ENCODE measurements at regions of chr4 and their contacts with region 1.

Region 1: DNA sequence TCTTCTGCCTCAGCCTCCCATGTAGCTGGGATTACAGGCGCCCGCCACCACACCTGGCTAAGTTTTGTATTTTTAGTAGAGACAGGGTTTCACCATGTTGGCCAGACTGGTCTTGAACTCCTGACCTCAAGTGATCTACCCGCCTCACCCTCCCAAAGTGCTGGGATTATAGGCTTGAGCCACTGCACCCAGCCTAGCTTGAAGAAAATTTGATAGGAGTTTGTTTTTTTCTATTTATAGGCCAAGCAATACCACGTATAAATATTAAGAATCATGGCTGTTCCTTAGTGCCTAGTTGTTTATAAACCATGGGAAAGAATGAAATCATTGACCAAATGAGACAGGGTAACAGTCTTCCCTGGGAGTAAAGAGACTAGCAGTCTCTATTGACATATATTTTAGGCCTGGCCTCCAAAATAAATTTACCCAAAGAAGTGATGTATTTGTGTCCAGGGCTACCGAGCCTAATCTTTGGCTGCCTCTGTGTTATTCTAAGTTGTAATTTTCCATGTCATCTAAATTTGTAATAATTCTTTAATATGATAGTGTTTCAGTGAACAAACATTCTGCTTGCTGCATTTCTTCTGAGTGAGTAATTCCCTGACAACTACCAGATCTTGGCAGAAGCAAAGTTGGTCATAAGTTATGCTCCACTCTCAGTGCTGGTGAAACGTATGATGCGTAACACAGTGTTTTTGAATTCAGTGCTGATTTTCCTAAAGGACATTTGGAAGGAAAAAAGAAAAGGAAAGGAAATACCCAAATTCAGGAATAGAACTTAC is 10.3 kb downstream of the PKD2 start:
- DNase-seq: peak; percentile 81
- H3K4me3 Mint-ChIP-seq: peak overlapping the region; percentile 5
- H3K27ac Mint-ChIP-seq: peak overlapping the region; percentile 78
- H3K4me1 Mint-ChIP-seq: peaks cover 24% of the 10 kb centered on the region
- H3K27me3 Mint-ChIP-seq: no peaks in the 10 kb centered on the region
- CTCF ChIP-seq: no peak

Region 2: DNA sequence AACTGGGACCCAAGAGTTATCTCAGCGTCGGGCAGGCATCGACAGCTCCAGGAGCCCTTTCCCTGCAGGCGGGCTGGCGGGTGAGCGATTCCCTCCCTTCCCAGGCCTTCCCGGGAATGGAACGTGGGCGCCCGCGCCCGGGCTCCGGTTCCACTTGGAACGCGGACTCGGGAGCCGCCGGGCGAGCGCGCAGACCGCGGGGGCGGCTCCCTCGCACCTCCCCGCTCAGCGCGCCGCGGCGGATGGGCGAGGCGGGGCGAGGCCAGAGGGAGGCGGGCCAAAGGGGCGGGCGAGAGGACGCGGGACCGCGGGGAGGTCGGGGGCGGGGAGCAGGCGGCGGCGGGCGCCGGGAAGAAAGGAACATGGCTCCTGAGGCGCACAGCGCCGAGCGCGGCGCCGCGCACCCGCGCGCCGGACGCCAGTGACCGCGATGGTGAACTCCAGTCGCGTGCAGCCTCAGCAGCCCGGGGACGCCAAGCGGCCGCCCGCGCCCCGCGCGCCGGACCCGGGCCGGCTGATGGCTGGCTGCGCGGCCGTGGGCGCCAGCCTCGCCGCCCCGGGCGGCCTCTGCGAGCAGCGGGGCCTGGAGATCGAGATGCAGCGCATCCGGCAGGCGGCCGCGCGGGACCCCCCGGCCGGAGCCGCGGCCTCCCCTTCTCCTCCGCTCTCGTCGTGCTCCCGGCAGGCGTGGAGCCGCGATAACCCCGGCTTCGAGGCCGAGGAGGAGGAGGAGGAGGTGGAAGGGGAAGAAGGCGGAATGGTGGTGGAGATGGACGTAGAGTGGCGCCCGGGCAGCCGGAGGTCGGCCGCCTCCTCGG is 10.2 kb before region 1 on chr4 and contains the start of gene PKD2:
- CTCF ChIA-PET with region 1: no interaction called
- POLR2A ChIA-PET with region 1: interaction called, 18 read pairs
- intact Hi-C with region 1: no loop called
- DNase-seq: peak; percentile 76
- H3K4me3 Mint-ChIP-seq: peak within 1 kb of the TSS; percentile 78
- H3K27ac Mint-ChIP-seq: peak within 1 kb of the TSS; percentile 14
- H3K4me1 Mint-ChIP-seq: peaks cover 16% of the 10 kb centered on the region
- H3K27me3 Mint-ChIP-seq: no peaks in the 10 kb centered on the region
- CTCF ChIP-seq: no peak
- total RNA-seq, gene PKD2: 29.5 and 36.6 TPM in 2 replicates

Region 3: DNA sequence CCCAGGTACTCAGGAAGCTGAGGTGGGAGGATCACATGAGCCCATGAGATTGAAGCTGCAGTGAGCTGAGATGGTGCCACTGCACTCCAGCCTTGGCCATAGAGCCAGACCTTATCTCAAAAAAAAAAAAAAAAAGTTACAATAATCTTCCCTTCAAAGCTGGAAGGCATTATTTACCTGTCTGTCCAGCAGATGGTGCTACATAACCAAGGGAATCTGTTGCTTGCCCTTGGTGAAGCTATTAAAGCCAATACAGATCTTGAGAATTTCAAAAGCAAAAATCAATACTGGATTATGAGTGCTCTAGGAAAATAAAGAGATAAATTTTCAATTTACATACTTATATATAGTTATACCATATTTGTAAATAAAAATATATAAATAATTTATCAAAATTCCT is 15.6 kb after region 1 on chr4:
- CTCF ChIA-PET with region 1: interaction called, 15 read pairs
- POLR2A ChIA-PET with region 1: no interaction called
- intact Hi-C with region 1: no loop called
- DNase-seq: peak; percentile 77
- H3K4me3 Mint-ChIP-seq: no peak overlapping the region
- H3K27ac Mint-ChIP-seq: no peak overlapping the region
- H3K4me1 Mint-ChIP-seq: peaks cover 10% of the 10 kb centered on the region
- H3K27me3 Mint-ChIP-seq: no peaks in the 10 kb centered on the region
- CTCF ChIP-seq: peak; percentile 69

Region 4: DNA sequence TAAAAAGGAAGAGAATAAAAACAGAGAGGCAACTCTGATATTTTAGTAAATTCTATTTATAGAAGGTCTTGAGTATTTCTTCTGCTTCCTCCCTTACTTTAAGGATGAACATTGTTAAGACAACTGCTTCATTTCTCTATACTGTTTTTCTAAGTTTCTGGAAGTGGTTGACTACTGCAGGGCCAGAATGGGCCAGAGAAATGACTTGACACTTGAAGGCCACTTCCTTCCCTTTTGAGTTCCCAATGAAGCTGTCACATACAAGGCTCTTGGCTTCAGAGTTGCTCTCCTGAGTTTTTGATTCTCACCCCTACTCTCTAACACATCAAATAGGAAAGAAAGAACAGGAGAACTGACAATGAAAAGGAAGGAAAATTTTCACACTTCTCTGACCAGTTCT is 27.3 kb after region 1 on chr4:
- CTCF ChIA-PET with region 1: no interaction called
- POLR2A ChIA-PET with region 1: no interaction called
- intact Hi-C with region 1: no loop called
- DNase-seq: no peak
- H3K4me3 Mint-ChIP-seq: no peak overlapping the region
- H3K27ac Mint-ChIP-seq: no peak overlapping the region
- H3K4me1 Mint-ChIP-seq: no peaks in the 10 kb centered on the region
- H3K27me3 Mint-ChIP-seq: no peaks in the 10 kb centered on the region
- CTCF ChIP-seq: no peak

Region 5: DNA sequence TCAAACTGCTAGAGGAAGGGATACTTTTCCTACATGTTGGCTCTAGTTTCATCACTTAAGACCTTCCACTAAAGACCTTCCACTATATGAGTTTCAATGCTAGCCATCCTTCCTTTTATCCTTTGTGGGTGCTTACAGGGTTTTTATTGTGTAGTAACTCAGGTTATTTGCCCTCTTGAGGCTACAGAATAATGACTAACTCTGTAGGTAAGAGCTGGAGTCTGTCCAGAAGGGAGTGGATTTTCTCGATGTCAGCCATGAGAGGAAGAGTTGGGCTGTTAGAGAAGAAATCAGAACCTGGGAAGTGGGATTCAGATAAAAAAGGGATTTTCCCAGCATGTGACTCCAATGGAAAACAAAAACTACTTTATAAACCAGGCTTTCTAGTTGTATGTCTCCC is 411.7 kb after region 1 on chr4:
- CTCF ChIA-PET with region 1: no interaction called
- POLR2A ChIA-PET with region 1: no interaction called
- intact Hi-C with region 1: no loop called
- DNase-seq: no peak
- H3K4me3 Mint-ChIP-seq: no peak overlapping the region
- H3K27ac Mint-ChIP-seq: no peak overlapping the region
- H3K4me1 Mint-ChIP-seq: no peaks in the 10 kb centered on the region
- H3K27me3 Mint-ChIP-seq: no peaks in the 10 kb centered on the region
- CTCF ChIP-seq: no peak